ENCODE measurements at regions of chr5 and their contacts with region 1.

Region 1: DNA sequence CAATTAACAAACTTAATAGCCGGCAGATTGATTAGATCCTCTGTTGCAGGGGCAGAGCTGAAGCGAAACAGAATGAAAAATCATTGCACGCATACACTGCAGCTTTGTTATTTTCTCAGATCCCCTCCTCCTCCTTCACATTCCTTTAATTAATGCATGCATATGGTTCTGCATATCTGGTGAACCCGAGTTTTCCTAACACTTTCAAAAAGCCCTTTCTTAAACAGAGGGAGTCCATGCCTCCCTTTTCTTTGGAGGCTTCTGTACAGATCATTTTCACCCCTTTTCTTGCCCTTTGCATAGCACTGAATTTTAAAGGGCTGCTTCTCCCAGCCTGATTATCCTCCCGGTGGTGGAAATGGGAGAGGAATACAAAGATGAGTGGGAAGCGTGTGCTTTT is 136.6 kb upstream of the TBCA start:
- DNase-seq: no peak
- H3K4me3 ChIP-seq: no peak overlapping the region
- H3K27ac ChIP-seq: no peak overlapping the region
- H3K4me1 ChIP-seq: no peaks in the 10 kb centered on the region
- H3K27me3 ChIP-seq: peaks cover 61% of the 10 kb centered on the region
- CTCF ChIP-seq: no peak

Region 2: GRCh38 chr5:76819841-76820525 is 1092.7 kb before region 1 on chr5:
- CTCF ChIA-PET with region 1: no interaction called
- POLR2A ChIA-PET with region 1: interaction called, 11 read pairs
- intact Hi-C with region 1: no loop called
- DNase-seq: no peak
- H3K4me3 ChIP-seq: no peak overlapping the region
- H3K27ac ChIP-seq: no peak overlapping the region
- H3K4me1 ChIP-seq: no peaks in the 10 kb centered on the region
- H3K27me3 ChIP-seq: no peaks in the 10 kb centered on the region
- CTCF ChIP-seq: no peak

Region 3: GRCh38 chr5:77761606-77762005 is 151.1 kb before region 1 on chr5:
- CTCF ChIA-PET with region 1: no interaction called
- POLR2A ChIA-PET with region 1: no interaction called
- intact Hi-C with region 1: no loop called
- DNase-seq: no peak
- H3K4me3 ChIP-seq: no peak overlapping the region
- H3K27ac ChIP-seq: no peak overlapping the region
- H3K4me1 ChIP-seq: no peaks in the 10 kb centered on the region
- H3K27me3 ChIP-seq: no peaks in the 10 kb centered on the region
- CTCF ChIP-seq: no peak